ENCODE measurements at regions of chr7 and their contacts with region 1.

Region 1: DNA sequence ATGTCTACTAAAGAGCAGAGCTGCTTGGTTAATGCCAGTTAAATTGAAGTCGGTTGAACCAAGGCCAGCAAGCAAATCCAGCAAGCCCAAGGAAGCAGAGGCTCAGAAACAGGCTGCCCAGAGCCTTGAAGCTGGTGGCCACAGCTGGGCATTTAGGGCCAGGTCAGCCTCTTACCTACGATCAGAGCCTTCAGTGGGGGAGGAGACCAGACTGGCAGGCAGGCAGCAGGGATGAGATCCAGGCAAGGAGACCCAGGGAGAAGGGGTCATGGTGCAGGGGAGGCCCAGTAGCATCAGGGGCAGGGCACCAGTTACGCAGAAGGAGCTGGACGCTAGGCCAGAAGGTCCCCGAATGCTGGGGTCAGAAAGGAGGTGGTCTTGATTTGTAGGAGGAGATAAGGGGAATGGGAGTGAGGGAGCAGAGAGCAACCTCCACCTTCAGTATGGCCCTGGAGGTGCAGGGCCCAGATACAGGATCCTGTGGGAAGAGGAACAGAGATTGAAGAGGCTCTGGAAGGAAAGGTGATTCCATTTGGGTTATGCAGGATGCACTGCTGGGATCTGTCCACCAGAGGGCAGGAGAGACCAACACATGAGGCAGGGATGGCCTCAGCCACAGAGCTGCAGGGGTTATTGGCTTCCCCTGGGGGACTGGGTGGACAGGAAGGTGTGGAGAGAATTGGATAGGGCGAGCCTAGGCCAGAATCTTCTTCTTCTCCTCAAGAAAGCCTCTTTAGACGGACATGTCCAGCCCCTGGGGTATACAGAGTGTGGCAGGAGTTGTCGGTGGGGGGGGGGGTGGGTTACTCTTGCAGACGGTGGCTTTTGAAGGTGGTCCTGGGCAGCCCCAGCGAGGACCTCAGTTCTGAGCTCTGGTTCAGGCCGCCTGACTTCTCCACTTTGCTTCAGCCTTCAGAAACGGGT is 132.6 kb upstream of the PODXL start:
- DNase-seq: no peak
- ATAC-seq: peak; percentile 86
- H3K4me3 ChIP-seq: no peak overlapping the region
- H3K27ac ChIP-seq: no peak overlapping the region
- H3K4me1 ChIP-seq: no peaks in the 10 kb centered on the region
- H3K27me3 ChIP-seq: peaks cover 2 to 3% of the 10 kb centered on the region in 2 experiments; a peak in 2 of 4 replicates
- CTCF ChIP-seq: peak; percentile 94 to 96 (median 95)
- EP300 ChIP-seq: no peak
- POLR2A ChIP-seq: no peak
- RAD21 ChIP-seq: peak; percentile 90

Region 2: DNA sequence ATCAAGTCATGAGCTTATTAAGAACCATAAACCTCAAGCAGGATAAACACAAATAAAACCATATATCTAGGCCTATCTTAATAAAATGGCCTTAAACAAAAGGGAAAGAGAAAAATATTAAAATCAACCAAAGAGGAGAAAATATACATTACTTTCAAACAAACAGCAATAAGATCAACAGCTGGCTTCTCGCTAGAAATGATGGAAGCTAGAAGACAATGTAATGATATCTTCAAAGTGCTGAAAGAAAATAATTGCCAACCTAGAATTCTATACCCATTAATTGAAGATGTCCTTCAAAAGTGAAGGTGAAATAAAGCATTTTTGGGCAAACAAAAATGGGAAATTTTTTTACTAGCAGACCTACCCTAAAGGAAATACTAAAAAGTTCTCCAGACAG is 10.3 kb after region 1 on chr7:
- CTCF ChIA-PET with region 1: interaction called, 20 read pairs
- POLR2A ChIA-PET with region 1: no interaction called
- RAD21 ChIA-PET with region 1: interaction called, 3 read pairs
- SMC1A ChIA-PET with region 1: interaction called, 4 read pairs
- in situ Hi-C with region 1: no loop called
- intact Hi-C with region 1: no loop called
- DNase-seq: no peak
- ATAC-seq: no peak
- H3K4me3 ChIP-seq: no peak overlapping the region
- H3K27ac ChIP-seq: no peak overlapping the region
- H3K4me1 ChIP-seq: no peaks in the 10 kb centered on the region
- H3K27me3 ChIP-seq: no peaks in the 10 kb centered on the region; a peak in 1 of 4 replicates
- CTCF ChIP-seq: no peak
- EP300 ChIP-seq: no peak
- POLR2A ChIP-seq: no peak
- RAD21 ChIP-seq: no peak

Region 3: DNA sequence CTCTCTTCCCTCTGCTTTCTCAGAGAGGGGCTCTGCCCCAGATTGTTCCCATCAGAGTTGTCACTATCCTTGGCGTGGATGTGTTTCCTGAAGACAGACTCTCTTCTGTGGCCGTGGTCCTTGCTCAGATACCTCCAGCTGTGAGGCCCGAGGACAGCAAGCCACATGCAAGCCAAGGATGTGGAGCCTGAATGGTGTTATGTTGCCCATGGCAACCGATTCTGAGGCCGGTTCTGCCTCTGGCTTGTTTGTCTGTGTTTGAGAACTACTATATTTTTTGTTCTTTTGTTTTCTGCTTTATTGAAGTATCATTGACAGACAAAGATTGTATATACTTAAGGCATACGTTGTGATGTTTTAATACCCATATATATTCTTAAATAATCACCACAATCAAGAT is 114.9 kb after region 1 on chr7:
- CTCF ChIA-PET with region 1: no interaction called
- POLR2A ChIA-PET with region 1: no interaction called
- RAD21 ChIA-PET with region 1: no interaction called
- SMC1A ChIA-PET with region 1: no interaction called
- in situ Hi-C with region 1: no loop called
- intact Hi-C with region 1: no loop called
- DNase-seq: no peak
- ATAC-seq: no peak
- H3K4me3 ChIP-seq: no peak overlapping the region
- H3K27ac ChIP-seq: no peak overlapping the region
- H3K4me1 ChIP-seq: no peaks in the 10 kb centered on the region
- H3K27me3 ChIP-seq: no peaks in the 10 kb centered on the region
- CTCF ChIP-seq: no peak
- EP300 ChIP-seq: no peak
- POLR2A ChIP-seq: no peak
- RAD21 ChIP-seq: no peak

Region 4: GRCh38 chr7:132049462-132050304 is 360.7 kb after region 1 on chr7:
- CTCF ChIA-PET with region 1: interaction called, 10 read pairs
- POLR2A ChIA-PET with region 1: no interaction called
- RAD21 ChIA-PET with region 1: interaction called, 3 read pairs
- SMC1A ChIA-PET with region 1: no interaction called
- in situ Hi-C with region 1: loop called (anchors 5 kb)
- intact Hi-C with region 1: loop called (anchors 2 kb)
- DNase-seq: no peak
- ATAC-seq: peak; percentile 42; the same call in 1 of the 3 replicates
- H3K4me3 ChIP-seq: no peak overlapping the region
- H3K27ac ChIP-seq: no peak overlapping the region
- H3K4me1 ChIP-seq: no peaks in the 10 kb centered on the region
- H3K27me3 ChIP-seq: no peaks in the 10 kb centered on the region; a peak in 1 of 4 replicates
- CTCF ChIP-seq: peak; percentile 56 to 69 (median 67)
- EP300 ChIP-seq: no peak
- POLR2A ChIP-seq: no peak
- RAD21 ChIP-seq: peak; percentile 43

Region 5: GRCh38 chr7:132102942-132103341 is 413.9 kb after region 1 on chr7:
- CTCF ChIA-PET with region 1: no interaction called
- POLR2A ChIA-PET with region 1: no interaction called
- RAD21 ChIA-PET with region 1: no interaction called
- SMC1A ChIA-PET with region 1: no interaction called
- in situ Hi-C with region 1: no loop called
- intact Hi-C with region 1: no loop called
- DNase-seq: no peak
- ATAC-seq: no peak
- H3K4me3 ChIP-seq: no peak overlapping the region
- H3K27ac ChIP-seq: no peak overlapping the region
- H3K4me1 ChIP-seq: no peaks in the 10 kb centered on the region
- H3K27me3 ChIP-seq: peaks cover 1 to 2% of the 10 kb centered on the region in 2 experiments; a peak in 3 of 4 replicates
- CTCF ChIP-seq: no peak
- EP300 ChIP-seq: no peak
- POLR2A ChIP-seq: no peak
- RAD21 ChIP-seq: no peak

Region 6: DNA sequence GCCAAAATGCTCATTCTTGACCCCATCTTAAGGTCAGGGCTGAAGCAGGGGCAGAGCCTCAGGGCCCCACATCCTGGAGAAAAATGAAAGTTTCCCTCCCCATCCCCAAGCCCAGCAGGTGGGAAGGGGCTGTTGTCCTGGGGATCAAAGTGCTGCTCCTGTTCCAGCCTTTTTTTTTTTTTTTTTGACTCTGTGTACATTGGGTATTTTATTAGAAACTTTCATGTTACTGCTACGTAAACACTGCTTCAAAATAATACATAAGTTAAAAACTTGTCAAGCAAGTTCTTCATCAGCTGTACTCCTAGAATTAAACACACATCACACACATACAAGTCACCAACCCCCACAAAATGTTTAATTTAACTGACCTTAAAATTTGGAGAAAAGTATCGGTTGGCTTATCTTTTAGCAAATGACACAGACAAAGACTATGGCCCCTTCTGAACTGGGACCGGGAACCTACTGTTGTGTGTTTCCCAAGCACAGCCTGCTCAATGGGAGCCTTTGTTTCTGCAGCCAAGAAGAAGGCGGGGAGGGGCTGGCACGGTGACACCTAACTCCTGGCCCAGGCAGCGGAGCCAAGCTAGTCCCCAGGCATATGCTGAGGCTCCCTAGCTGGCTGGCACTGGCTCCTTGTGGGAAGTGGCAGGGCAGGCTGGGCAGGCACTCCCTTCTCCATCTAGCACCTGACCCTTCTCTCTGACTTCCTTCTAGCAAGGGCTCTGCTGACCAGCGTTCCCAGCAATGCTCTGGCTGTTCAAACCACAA is 562.1 kb after region 1 on chr7:
- CTCF ChIA-PET with region 1: interaction called, 3 read pairs
- POLR2A ChIA-PET with region 1: no interaction called
- RAD21 ChIA-PET with region 1: no interaction called
- SMC1A ChIA-PET with region 1: no interaction called
- in situ Hi-C with region 1: no loop called
- intact Hi-C with region 1: loop called (anchors 10 kb)
- DNase-seq: no peak
- ATAC-seq: no peak
- H3K4me3 ChIP-seq: no peak overlapping the region
- H3K27ac ChIP-seq: no peak overlapping the region
- H3K4me1 ChIP-seq: no peaks in the 10 kb centered on the region
- H3K27me3 ChIP-seq: no peaks in the 10 kb centered on the region; a peak in 1 of 4 replicates
- CTCF ChIP-seq: no peak
- EP300 ChIP-seq: no peak
- POLR2A ChIP-seq: no peak
- RAD21 ChIP-seq: no peak